HCT116 (cell line): ENCODE measurements at regions of chr5 and their contacts with region 1.

Region 1: DNA sequence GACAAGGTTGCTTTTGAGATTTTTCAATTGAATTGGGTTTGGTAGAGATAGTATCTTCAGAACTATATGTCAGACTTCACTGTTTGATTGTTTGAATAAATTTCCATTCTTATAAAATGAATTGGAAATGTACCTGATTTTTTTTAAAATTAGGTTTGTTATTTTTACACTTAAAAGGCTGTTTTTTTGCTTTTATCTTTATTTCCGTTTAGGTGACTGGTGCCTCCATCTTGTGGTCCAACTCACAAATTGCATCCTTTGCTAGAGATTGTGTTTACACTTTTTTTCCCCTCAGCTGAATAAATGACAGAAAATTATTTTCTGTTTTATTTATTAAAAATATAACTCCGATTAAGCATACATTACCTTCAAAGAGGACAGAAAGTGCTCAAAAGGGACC is 15.6 kb downstream of the NDUFAF2 start:
- DNase-seq: peak; percentile 6
- ATAC-seq: no peak
- H3K4me3 ChIP-seq: no peak overlapping the region
- H3K27ac ChIP-seq: no peak overlapping the region
- H3K4me1 ChIP-seq: no peaks in the 10 kb centered on the region; a peak in 1 of 4 replicates
- H3K27me3 ChIP-seq: no peaks in the 10 kb centered on the region
- CTCF ChIP-seq: peak; percentile 15 to 60 (median 53); a peak in 5 of 6 replicates
- POLR2A ChIP-seq: no peak
- RAD21 ChIP-seq: peak; percentile 38

Region 2: DNA sequence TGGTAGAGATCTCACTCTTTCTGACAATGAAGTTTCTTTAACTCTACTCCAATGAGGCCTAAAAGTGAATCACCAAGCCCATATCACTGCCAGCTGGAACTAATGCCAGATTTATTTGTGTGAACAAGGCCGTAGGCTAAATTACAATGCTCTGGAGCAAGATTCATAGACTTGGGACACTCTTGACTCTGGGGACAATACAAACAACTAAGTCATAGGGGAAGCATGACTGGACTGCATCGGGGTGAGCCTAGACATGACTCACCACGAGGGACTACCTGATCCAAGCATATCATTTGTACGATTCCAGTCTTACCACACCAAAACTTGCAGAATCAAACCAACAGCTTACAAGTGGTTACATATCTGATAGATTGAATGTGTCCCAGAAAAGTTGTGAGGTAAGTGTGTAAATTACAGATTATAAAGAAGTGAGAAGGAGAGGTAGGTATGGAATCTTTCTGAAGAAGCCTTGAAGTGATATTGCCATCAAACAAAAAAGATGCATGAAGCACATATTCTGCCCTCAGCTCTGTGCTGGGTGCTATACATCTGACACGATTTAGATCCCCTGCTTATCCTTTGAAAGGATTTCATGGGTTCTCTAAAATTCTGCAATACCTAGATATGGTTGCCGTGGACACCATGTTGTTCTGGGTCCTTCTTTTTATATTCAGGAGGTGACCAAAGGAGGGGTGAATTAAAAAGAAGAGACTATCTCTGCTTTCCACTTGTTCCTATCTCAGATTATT is 867.7 kb before region 1 on chr5:
- CTCF ChIA-PET with region 1: no interaction called
- POLR2A ChIA-PET with region 1: no interaction called
- RAD21 ChIA-PET with region 1: no interaction called
- intact Hi-C with region 1: no loop called
- DNase-seq: no peak
- ATAC-seq: no peak
- H3K4me3 ChIP-seq: no peak overlapping the region
- H3K27ac ChIP-seq: no peak overlapping the region
- H3K4me1 ChIP-seq: no peaks in the 10 kb centered on the region
- H3K27me3 ChIP-seq: no peaks in the 10 kb centered on the region
- CTCF ChIP-seq: no peak
- POLR2A ChIP-seq: no peak
- RAD21 ChIP-seq: no peak

Region 3: DNA sequence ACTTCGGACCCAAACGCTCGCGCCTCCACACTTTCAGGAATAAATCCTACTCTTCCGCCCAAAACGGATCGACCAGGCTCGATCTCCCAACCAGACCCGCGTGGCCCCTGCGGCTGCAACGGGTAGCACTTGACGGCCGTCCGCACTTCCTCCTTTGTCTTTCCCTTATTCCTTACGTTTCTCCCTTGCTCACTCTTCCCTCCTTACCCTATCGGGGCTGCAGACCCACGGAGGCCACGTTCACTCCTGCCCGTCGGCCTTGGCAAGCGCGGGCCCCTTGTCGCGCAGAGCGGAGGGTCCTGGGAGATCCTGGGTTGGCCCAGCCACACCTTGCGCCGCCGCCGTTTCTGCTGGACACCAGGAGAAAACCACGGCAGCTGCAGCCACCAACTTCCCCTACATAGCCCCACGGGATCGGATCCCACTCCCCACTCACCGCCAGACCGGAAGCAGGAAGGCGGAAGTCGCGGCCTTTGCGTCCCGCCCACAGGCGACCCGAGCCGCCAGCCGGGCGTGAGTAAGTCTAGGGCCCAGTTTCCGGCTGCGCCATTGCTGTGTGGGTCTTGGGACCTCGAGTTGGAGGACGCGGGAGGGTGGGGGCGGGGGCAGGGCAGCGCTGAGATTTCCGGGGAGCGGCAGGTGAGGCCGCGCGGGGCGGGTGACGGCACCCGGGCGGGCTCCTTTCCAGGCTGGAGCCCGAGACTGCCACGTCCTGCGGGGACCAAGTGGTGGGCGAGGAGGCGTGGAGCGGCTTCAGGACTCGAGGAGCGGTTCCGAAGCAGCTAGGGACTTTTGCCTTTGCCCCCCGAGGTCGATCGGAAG is 201.6 kb after region 1 on chr5 and contains the start of gene SMIM15:
- CTCF ChIA-PET with region 1: no interaction called
- POLR2A ChIA-PET with region 1: no interaction called
- RAD21 ChIA-PET with region 1: interaction called in 1 of 2 experiments, 3 read pairs
- intact Hi-C with region 1: loop called (anchors 5 kb)
- DNase-seq: peak; percentile 79
- ATAC-seq: peak; percentile 94
- H3K4me3 ChIP-seq: peak within 1 kb of the TSS; percentile 92 to 95
- H3K27ac ChIP-seq: peak within 1 kb of the TSS; percentile 87
- H3K4me1 ChIP-seq: peaks cover 0 to 16% of the 10 kb centered on the region in 2 experiments; a peak in 2 of 4 replicates
- H3K27me3 ChIP-seq: no peaks in the 10 kb centered on the region
- CTCF ChIP-seq: no peak
- POLR2A ChIP-seq: peak; percentile 59
- RAD21 ChIP-seq: no peak
- total RNA-seq, gene SMIM15: 83.9 TPM

Region 4: GRCh38 chr5:61658592-61659008 is 698.0 kb after region 1 on chr5:
- CTCF ChIA-PET with region 1: interaction called, 8 read pairs
- POLR2A ChIA-PET with region 1: no interaction called
- RAD21 ChIA-PET with region 1: no interaction called
- intact Hi-C with region 1: loop called (anchors 1 kb)
- DNase-seq: peak; percentile 67
- ATAC-seq: peak; percentile 98
- H3K4me3 ChIP-seq: no peak overlapping the region
- H3K27ac ChIP-seq: no peak overlapping the region
- H3K4me1 ChIP-seq: no peaks in the 10 kb centered on the region
- H3K27me3 ChIP-seq: no peaks in the 10 kb centered on the region
- CTCF ChIP-seq: peak; percentile 65 to 97 (median 91); a peak in 5 of 6 replicates
- POLR2A ChIP-seq: no peak
- RAD21 ChIP-seq: peak; percentile 81

Region 5: DNA sequence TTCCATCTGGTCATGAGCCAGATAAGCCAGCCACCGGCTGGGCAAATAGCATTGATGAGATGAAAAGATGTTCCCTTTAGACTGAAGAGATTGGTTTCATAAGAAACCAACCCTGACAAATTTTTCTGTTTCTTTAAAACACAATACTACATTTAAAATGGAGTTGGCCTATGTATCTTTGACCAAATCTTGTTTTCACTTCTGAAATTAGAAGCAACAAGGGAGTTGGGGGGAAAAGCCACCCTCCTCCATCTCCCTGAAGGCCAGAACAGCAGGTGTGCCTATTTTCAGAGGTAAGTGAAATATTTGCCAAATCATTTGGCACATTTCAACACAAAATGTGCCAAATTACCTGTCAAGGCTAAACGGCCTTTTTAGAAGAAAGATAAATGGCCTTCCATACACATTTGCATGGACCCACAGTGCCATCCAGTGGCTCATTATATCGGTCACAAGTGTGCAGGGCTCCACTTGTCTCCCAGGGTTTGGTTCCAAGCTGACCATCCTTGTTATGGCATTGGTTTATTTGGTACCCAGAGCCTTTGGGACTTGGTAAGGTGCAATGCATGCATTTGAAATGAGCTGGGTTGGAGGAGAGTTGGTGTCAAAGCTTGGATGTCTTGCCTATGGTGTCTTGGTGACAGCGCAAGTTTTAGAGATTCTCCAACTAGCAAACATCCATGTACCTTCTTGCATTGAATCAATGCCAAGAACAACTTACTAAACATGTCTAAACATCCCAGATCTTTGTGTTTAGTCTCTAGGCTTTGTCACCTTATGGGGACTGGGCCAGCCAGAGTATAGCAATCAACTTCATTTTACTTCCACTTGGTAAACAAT is 973.4 kb after region 1 on chr5:
- CTCF ChIA-PET with region 1: interaction called, 16 read pairs
- POLR2A ChIA-PET with region 1: no interaction called
- RAD21 ChIA-PET with region 1: no interaction called
- intact Hi-C with region 1: loop called (anchors 2 kb)
- DNase-seq: peak; percentile 34
- ATAC-seq: peak; percentile 87
- H3K4me3 ChIP-seq: no peak overlapping the region
- H3K27ac ChIP-seq: no peak overlapping the region
- H3K4me1 ChIP-seq: no peaks in the 10 kb centered on the region
- H3K27me3 ChIP-seq: no peaks in the 10 kb centered on the region; the same call in 1 of the 2 replicates
- CTCF ChIP-seq: peak; percentile 44 to 66 (median 61); a peak in 5 of 6 replicates
- POLR2A ChIP-seq: no peak
- RAD21 ChIP-seq: peak; percentile 81

Region 6: DNA sequence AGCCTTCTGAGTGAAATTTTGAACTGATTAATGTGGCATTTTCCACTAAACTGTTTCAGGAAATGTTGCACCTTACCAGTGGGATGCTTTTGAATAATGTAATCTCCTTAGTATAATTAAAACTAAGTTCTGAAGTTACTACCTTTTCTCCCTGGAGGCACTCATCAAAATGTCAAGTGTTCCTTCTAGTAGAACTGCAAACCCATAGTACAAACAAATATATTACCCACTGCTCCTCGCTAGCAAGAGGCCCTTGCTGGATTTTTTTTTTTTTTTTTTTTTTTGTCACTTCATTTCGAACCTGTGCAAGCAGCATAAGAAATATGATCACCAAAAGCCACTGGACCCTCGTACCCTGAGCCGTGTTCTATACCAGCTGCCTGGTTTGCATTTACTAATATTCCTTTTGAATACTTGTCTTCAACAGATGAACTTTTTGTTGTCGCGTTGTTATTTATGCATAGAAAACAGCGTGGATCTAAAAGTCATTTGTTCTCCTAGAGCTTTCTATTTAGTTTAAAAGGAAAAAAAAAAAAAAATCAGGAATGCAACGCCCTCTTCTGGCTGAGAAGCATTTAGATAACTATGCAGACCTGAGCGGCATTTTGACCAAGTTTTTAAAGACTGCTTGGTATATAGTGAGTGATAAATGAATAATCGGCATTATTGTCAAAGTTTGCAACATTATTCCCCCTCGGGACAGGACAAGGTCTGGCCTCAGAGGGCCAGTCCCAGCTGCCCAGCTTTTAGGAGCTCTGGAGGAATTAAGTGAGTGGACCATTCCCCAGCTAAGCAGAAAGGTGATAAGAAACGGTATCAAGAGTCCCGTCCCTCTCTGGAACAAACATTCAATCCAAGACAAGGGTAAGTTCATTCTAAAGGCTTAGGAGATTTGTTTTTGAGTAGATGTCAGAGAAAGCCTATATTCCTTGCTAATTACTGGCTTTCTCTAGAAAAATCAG is 1183.0 kb after region 1 on chr5:
- CTCF ChIA-PET with region 1: interaction called, 5 read pairs
- POLR2A ChIA-PET with region 1: no interaction called
- RAD21 ChIA-PET with region 1: no interaction called
- intact Hi-C with region 1: loop called (anchors 10 kb)
- DNase-seq: peak; percentile 16
- ATAC-seq: peak; percentile 82
- H3K4me3 ChIP-seq: no peak overlapping the region
- H3K27ac ChIP-seq: no peak overlapping the region
- H3K4me1 ChIP-seq: no peaks in the 10 kb centered on the region
- H3K27me3 ChIP-seq: peaks cover 53% of the 10 kb centered on the region
- CTCF ChIP-seq: peak; percentile 20 to 69 (median 48); a peak in 5 of 6 replicates
- POLR2A ChIP-seq: no peak
- RAD21 ChIP-seq: peak; percentile 49